ENCODE measurements at regions of chr5 and their contacts with region 1.

Region 1: GRCh38 chr5:36079200-36079761 is 12.6 kb upstream of the UGT3A2 start:
- DNase-seq: peak; percentile 43
- ATAC-seq: peak; percentile 63
- H3K4me3 ChIP-seq: no peak overlapping the region
- H3K4me3 Mint-ChIP-seq: no peak overlapping the region
- H3K27ac ChIP-seq: no peak overlapping the region
- H3K27ac Mint-ChIP-seq: no peak overlapping the region
- H3K4me1 ChIP-seq: no peaks in the 10 kb centered on the region
- H3K4me1 Mint-ChIP-seq: no peaks in the 10 kb centered on the region
- H3K27me3 ChIP-seq: peaks cover 0 to 2% (median 0%) of the 10 kb centered on the region in 4 experiments
- H3K27me3 Mint-ChIP-seq: peaks cover 26% of the 10 kb centered on the region
- CTCF ChIP-seq: peak; percentile 75

Region 2: GRCh38 chr5:36305571-36306326 is 226.5 kb after region 1 on chr5:
- CTCF ChIA-PET with region 1: interaction called, 6 read pairs
- POLR2A ChIA-PET with region 1: no interaction called
- intact Hi-C with region 1: loop called (anchors 1 kb)
- DNase-seq: peak; percentile 25
- ATAC-seq: peak; percentile 41
- H3K4me3 ChIP-seq: no peak overlapping the region
- H3K4me3 Mint-ChIP-seq: no peak overlapping the region
- H3K27ac ChIP-seq: no peak overlapping the region
- H3K27ac Mint-ChIP-seq: no peak overlapping the region
- H3K4me1 ChIP-seq: no peaks in the 10 kb centered on the region
- H3K4me1 Mint-ChIP-seq: peaks cover 8% of the 10 kb centered on the region
- H3K27me3 ChIP-seq: no peaks in the 10 kb centered on the region
- H3K27me3 Mint-ChIP-seq: no peaks in the 10 kb centered on the region
- CTCF ChIP-seq: peak; percentile 46